A673 (cell line): ENCODE measurements at regions of chr4 and their contacts with region 1.

Region 1: GRCh38 chr4:42391981-42392380 is 5.3 kb upstream of the SHISA3 start:
- DNase-seq: peak; percentile 59
- H3K4me3 ChIP-seq: no peak overlapping the region
- H3K27ac ChIP-seq: no peak overlapping the region
- H3K4me1 ChIP-seq: peaks cover 7% of the 10 kb centered on the region
- H3K27me3 ChIP-seq: peaks cover 19% of the 10 kb centered on the region
- CTCF ChIP-seq: no peak

Region 2: GRCh38 chr4:42234817-42235216 is 157.2 kb before region 1 on chr4:
- CTCF ChIA-PET with region 1: no interaction called
- POLR2A ChIA-PET with region 1: no interaction called
- intact Hi-C with region 1: no loop called
- DNase-seq: no peak
- H3K4me3 ChIP-seq: no peak overlapping the region
- H3K27ac ChIP-seq: no peak overlapping the region
- H3K4me1 ChIP-seq: no peaks in the 10 kb centered on the region
- H3K27me3 ChIP-seq: peaks cover 8% of the 10 kb centered on the region
- CTCF ChIP-seq: no peak

Region 3: DNA sequence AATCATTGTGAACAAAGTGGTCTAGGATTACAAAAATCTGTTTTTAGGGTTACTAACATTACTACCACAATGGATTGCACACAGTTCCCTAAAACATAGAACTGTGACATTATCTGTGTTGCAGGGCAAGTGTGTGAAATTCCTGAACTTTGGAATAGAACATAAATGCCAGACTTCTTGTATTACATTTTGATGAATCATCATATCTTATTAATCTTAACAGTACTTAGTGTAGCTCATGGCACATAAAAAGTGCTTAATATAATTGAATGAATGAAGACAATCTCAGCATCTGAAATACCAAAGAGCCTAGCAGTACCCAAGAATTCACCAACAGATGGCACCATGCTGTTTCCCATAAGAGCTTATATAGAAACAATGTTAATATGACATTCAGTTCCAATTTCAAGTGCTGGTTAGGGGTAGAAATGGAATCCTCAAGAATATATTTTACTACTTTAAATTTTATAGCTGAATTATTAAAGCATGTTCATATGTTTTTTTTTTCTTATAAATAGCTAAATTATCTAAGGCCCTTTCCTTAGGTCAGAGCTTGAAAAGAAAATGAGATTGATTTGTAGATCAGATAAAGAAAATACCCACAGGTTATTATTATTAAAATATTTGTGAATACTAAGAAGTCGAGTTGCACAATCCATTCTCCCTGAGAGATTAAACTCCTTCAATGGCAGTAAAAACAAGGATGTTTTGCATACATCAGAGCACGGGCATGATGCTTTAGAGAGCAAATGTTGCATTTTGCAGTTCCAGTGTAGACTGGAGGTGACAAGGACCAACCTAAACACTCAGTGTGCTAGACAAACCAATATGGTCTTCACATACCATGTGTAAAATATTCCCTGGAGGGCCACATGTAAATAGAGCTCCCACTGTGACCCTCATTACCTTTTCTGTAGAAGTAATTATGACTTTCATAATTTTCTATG is 20.4 kb before region 1 on chr4:
- CTCF ChIA-PET with region 1: interaction called, 10 read pairs
- POLR2A ChIA-PET with region 1: no interaction called
- intact Hi-C with region 1: no loop called
- DNase-seq: peak; percentile 57
- H3K4me3 ChIP-seq: no peak overlapping the region
- H3K27ac ChIP-seq: no peak overlapping the region
- H3K4me1 ChIP-seq: no peaks in the 10 kb centered on the region
- H3K27me3 ChIP-seq: no peaks in the 10 kb centered on the region
- CTCF ChIP-seq: peak; percentile 67